WTC11 (cell line): ENCODE measurements at regions of chr20 and their contacts with region 1.

Region 1: DNA sequence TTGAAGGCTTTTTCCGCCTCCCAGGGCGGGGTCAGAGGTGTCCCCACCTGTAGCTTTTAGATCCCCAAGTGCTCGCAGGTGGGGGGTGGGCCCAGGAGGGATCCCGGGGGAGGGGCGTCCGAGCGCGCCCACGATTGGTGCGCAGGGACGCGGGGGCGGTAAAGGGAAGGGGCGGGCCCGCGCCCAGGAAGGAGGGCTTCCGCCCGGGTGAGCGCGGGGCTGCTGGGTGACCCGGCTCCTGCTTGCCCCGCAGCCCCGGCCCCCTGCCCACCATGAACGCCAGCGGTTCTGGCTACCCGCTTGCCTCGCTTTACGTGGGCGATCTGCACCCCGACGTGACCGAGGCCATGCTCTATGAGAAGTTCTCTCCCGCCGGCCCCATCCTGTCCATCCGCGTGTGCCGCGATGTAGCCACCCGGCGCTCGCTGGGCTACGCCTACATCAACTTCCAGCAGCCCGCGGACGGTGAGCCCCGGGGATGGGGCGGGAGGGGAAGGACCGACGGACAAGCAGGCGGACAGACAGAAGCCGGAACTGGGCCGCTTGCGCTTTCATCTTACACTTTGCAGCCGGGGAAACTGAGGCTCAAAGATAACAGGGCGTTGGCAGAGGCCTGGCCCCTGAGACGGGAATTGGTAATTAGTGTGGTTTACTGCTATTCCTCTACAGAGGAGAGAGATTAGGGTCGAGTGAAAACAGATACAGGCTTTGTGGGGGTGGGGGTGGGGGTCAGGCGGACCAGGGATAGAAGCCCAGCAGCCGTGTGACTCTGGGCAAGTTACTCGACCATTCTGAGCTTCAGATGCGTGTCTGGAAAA is at the start of gene PABPC1L:
- DNase-seq: peak; percentile 90
- ATAC-seq: peak; percentile 86
- H3K4me3 Mint-ChIP-seq: peak within 1 kb of the TSS; percentile 84
- H3K27ac Mint-ChIP-seq: peak within 1 kb of the TSS; percentile 63
- H3K4me1 Mint-ChIP-seq: peaks cover 24% of the 10 kb centered on the region
- H3K27me3 Mint-ChIP-seq: no peaks in the 10 kb centered on the region
- CTCF ChIP-seq: no peak
- total RNA-seq, gene PABPC1L: 88.3 to 98.2 TPM (median 90.7 TPM) in 3 replicates

Region 2: GRCh38 chr20:44885392-44886265 is 24.5 kb before region 1 on chr20 and contains the start of gene YWHAB:
- CTCF ChIA-PET with region 1: interaction called, 13 read pairs
- POLR2A ChIA-PET with region 1: interaction called, 8 read pairs
- DNase-seq: peak; percentile 99
- ATAC-seq: peak; percentile 98
- H3K4me3 Mint-ChIP-seq: peak within 1 kb of the TSS; percentile 97
- H3K27ac Mint-ChIP-seq: peak within 1 kb of the TSS; percentile 91
- H3K4me1 Mint-ChIP-seq: peaks cover 46% of the 10 kb centered on the region
- H3K27me3 Mint-ChIP-seq: peaks cover 3% of the 10 kb centered on the region; the same call in 1 of the 2 replicates
- CTCF ChIP-seq: no peak
- total RNA-seq, gene YWHAB: 177 to 216 TPM (median 183 TPM) in 3 replicates